ENCODE measurements at regions of chr10 and their contacts with region 1.

Region 1: DNA sequence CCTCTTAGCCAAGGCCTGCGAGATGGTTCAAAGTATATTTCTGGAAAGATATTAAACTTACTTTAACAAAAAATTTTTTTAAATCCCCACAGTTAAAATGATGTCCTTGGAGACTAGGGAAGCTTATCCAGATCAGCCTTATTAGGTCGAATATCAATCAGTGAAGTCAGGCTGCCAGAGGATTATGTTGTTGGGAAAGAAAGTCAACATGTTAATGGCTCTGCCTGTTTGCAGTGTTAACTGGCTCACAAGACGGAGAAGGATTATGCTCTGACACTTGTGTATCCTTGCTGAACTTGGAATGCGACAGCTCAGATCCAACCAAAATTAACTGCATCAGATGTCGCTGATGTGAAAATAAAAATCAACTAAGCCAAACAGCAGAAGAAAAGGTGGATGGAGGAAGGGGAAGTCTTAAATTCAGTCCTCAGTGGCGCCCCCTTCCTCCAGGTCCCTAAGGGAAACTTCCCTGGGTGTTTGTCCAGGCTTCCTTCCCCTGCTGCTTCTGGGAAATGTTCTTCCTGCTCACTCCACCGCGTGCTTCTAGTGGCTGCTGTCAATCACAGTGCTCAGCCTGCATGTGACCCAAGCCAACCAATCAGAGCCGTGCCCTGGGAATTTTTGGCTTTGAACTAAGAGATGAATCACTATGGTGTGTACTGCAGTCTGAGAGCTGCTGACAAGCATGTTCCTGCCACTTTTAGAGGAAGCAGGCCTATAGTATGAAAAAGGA is 690.4 kb upstream of the NRP1 start:
- DNase-seq: no peak
- ATAC-seq: no peak
- H3K4me3 ChIP-seq: no peak overlapping the region
- H3K27ac ChIP-seq: no peak overlapping the region
- H3K4me1 ChIP-seq: no peaks in the 10 kb centered on the region
- H3K27me3 ChIP-seq: no peaks in the 10 kb centered on the region
- CTCF ChIP-seq: 0 out of 2 replicates have a peak, but pooled peaks have one; percentile 12

Region 2: GRCh38 chr10:33542752-33543505 is 481.9 kb before region 1 on chr10:
- CTCF ChIA-PET with region 1: no interaction called
- POLR2A ChIA-PET with region 1: no interaction called
- in situ Hi-C with region 1: no loop called
- intact Hi-C with region 1: no loop called
- DNase-seq: no peak
- ATAC-seq: no peak
- H3K4me3 ChIP-seq: no peak overlapping the region
- H3K27ac ChIP-seq: no peak overlapping the region
- H3K4me1 ChIP-seq: no peaks in the 10 kb centered on the region
- H3K27me3 ChIP-seq: no peaks in the 10 kb centered on the region
- CTCF ChIP-seq: no peak

Region 3: GRCh38 chr10:33760056-33760943 is 264.6 kb before region 1 on chr10:
- CTCF ChIA-PET with region 1: no interaction called
- POLR2A ChIA-PET with region 1: interaction called, 10 read pairs
- in situ Hi-C with region 1: no loop called
- intact Hi-C with region 1: no loop called
- DNase-seq: no peak
- ATAC-seq: no peak
- H3K4me3 ChIP-seq: no peak overlapping the region
- H3K27ac ChIP-seq: no peak overlapping the region
- H3K4me1 ChIP-seq: no peaks in the 10 kb centered on the region
- H3K27me3 ChIP-seq: no peaks in the 10 kb centered on the region
- CTCF ChIP-seq: no peak

Measured in Panc1 (cell line).